MCF 10A (cell line): ENCODE measurements at regions of chr3 and their contacts with region 1.

Region 1: GRCh38 chr3:108914774-108915641 is 38.7 kb downstream of the GUCA1C start:
- DNase-seq: peak; percentile 87
- H3K4me3 Mint-ChIP-seq: no peak overlapping the region
- H3K27ac Mint-ChIP-seq: no peak overlapping the region
- H3K4me1 Mint-ChIP-seq: peaks cover 21% of the 10 kb centered on the region
- H3K27me3 Mint-ChIP-seq: no peaks in the 10 kb centered on the region
- CTCF ChIP-seq: peak; percentile 86

Region 2: GRCh38 chr3:108489771-108490170 is 425.2 kb before region 1 on chr3:
- CTCF ChIA-PET with region 1: no interaction called
- POLR2A ChIA-PET with region 1: no interaction called
- intact Hi-C with region 1: loop called (anchors 1 kb)
- DNase-seq: peak; percentile 59
- H3K4me3 Mint-ChIP-seq: no peak overlapping the region
- H3K27ac Mint-ChIP-seq: no peak overlapping the region
- H3K4me1 Mint-ChIP-seq: no peaks in the 10 kb centered on the region
- H3K27me3 Mint-ChIP-seq: no peaks in the 10 kb centered on the region
- CTCF ChIP-seq: peak; percentile 75

Region 3: GRCh38 chr3:108564564-108564963 is 350.4 kb before region 1 on chr3:
- CTCF ChIA-PET with region 1: no interaction called
- POLR2A ChIA-PET with region 1: no interaction called
- intact Hi-C with region 1: no loop called
- DNase-seq: no peak
- H3K4me3 Mint-ChIP-seq: no peak overlapping the region
- H3K27ac Mint-ChIP-seq: peak overlapping the region; percentile 62
- H3K4me1 Mint-ChIP-seq: peaks cover 6% of the 10 kb centered on the region
- H3K27me3 Mint-ChIP-seq: no peaks in the 10 kb centered on the region
- CTCF ChIP-seq: no peak

Region 4: GRCh38 chr3:108662130-108662738 is 252.8 kb before region 1 on chr3:
- CTCF ChIA-PET with region 1: interaction called, 110 read pairs
- POLR2A ChIA-PET with region 1: interaction called, 4 read pairs
- intact Hi-C with region 1: loop called (anchors 1 kb)
- DNase-seq: peak; percentile 76
- H3K4me3 Mint-ChIP-seq: no peak overlapping the region
- H3K27ac Mint-ChIP-seq: no peak overlapping the region
- H3K4me1 Mint-ChIP-seq: no peaks in the 10 kb centered on the region
- H3K27me3 Mint-ChIP-seq: no peaks in the 10 kb centered on the region
- CTCF ChIP-seq: peak; percentile 58

Region 5: DNA sequence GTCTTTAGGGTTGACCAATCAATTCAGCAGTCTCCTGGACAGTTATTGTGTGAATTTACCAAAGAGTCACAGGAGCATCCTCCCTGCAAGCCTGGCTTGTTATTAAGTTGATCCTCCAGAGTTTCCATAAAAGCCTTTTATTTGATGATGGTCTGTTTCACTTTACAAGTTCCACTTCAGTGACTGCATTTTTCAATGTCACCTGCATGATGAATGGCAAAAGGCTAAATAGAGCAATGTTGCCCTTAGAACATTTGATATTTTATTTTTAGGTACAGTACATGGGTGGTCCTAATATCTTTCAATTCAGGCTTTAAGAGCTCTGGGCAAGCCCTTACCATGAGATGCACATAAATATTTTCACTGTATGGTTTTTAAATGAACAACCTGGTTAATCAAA is 16.0 kb after region 1 on chr3:
- CTCF ChIA-PET with region 1: interaction called, 27 read pairs
- POLR2A ChIA-PET with region 1: interaction called, 6 read pairs
- intact Hi-C with region 1: no loop called
- DNase-seq: no peak
- H3K4me3 Mint-ChIP-seq: no peak overlapping the region
- H3K27ac Mint-ChIP-seq: no peak overlapping the region
- H3K4me1 Mint-ChIP-seq: no peaks in the 10 kb centered on the region
- H3K27me3 Mint-ChIP-seq: no peaks in the 10 kb centered on the region
- CTCF ChIP-seq: no peak

Region 6: DNA sequence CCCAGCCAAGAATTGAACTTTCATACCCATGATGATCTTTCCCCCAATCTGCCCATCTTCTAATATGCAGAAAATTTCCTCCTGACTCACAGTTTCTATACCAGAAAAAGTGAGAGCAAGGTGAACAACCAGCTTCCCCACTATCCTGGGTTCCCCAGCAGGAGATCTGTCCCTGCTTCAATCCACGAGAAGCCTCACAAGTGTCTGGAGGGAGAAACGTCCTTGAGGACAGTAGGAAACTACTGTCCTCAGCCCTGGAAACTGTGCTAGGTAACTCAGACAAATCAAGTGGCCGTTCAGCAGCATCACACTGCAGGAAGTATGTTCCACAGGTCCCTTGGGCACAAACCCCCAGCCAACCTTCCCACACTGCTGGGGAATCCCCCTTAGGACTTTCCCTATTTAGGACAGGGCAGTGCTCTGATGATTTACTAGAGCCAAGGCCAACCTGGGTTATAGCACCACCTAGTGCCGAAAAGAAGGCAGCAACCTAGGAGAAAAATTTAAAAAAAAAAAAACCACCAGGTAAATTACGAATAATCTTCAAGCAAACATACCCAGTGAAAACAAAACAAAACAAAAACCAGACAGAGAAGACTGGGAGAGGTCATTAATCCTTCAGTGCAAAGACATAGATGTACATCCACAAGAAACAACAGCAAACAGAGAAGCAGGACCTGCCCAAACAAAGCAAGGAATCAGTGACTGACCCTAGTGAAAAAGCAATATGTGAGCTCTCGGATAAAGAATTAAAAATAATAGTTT is 166.9 kb after region 1 on chr3:
- CTCF ChIA-PET with region 1: interaction called, 27 read pairs
- POLR2A ChIA-PET with region 1: interaction called, 3 read pairs
- intact Hi-C with region 1: loop called (anchors 5 kb)
- DNase-seq: peak; percentile 71
- H3K4me3 Mint-ChIP-seq: no peak overlapping the region
- H3K27ac Mint-ChIP-seq: peak overlapping the region; percentile 55
- H3K4me1 Mint-ChIP-seq: peaks cover 6% of the 10 kb centered on the region
- H3K27me3 Mint-ChIP-seq: no peaks in the 10 kb centered on the region
- CTCF ChIP-seq: peak; percentile 75